ENCODE measurements at regions of chr7 and their contacts with region 1.

Region 1: DNA sequence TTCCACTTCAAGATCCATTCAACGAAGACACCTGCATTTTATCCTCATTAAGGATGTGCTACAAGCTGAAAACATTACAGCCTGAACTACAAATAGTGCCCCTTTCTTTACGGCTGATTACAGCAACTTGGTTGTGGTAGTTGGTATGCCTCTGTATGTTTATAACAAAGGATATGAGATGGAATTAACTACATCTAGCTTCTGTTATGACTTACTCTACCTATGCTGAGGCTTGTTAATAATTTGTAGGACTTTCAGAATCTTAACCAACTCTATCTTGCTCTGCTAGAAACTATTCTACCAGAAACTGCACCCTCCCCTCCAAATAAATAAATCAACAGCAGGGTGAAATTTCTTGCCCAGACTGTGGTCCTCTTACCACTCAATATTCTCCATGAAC is 448.1 kb downstream of the GRM8 start:
- DNase-seq: no peak
- H3K4me3 ChIP-seq: no peak overlapping the region
- H3K27ac ChIP-seq: no peak overlapping the region
- H3K4me1 ChIP-seq: no peaks in the 10 kb centered on the region
- H3K27me3 ChIP-seq: no peaks in the 10 kb centered on the region
- CTCF ChIP-seq: no peak
- POLR2A ChIP-seq: no peak

Region 2: DNA sequence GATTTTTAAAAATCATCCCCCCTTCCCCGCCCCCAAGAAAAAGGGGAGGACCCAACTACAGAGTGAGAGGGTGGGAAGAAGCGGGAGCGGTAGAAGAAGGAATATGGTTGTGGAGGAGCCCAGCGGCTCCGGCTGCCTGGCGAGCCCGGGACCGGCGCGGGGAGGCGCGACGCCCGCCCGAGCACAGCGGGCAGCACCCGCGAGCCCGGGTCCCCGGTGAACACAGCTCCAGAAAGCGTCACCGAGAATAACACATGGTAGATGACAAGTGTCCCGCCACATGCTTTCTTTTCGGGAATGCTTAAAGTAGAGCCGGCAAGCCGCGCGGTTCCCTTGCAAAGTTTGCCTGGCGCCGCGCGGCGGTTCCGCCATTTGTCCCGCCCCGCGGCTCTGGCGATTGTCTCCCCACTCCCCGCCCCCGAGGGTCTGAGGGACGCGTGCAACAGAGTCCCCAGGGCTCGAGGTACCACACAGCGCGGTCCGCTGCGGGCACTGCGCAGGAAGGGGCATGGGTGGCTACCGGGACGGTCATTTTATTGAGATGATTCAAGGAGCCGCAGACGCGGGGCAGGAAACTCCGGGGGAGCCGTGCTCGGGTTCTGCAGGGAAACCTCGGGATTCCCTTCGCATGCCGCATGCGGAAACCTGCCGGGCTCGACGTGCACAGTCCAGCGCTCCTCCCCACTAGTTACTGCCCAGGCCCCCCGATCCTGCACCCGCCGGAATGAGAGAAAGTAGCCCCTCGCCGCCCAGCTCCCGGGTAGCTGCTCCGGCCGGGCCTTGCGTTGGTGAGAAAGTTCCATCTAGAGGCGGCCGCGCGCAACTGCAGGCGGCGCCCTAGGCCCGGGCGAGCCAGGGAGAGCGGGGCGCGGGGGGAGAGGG is 448.9 kb after region 1 on chr7:
- intact Hi-C with region 1: loop called (anchors 5 kb)
- DNase-seq: no peak
- H3K4me3 ChIP-seq: peak overlapping the region; percentile 67 to 70
- H3K27ac ChIP-seq: no peak overlapping the region
- H3K4me1 ChIP-seq: peaks cover 19% of the 10 kb centered on the region
- H3K27me3 ChIP-seq: no peaks in the 10 kb centered on the region
- CTCF ChIP-seq: peak; percentile 28 to 60 (median 55)
- POLR2A ChIP-seq: no peak

Measured in vagina (tissue), 2 donors.